ENCODE measurements at regions of chr14 and their contacts with region 1.

Region 1: GRCh38 chr14:71138448-71139293 is 231.4 kb downstream of the PCNX1 start:
- DNase-seq: peak; percentile 49 to 68 (median 59)
- ATAC-seq: peak; percentile 80 to 88 (median 86)
- H3K4me3 ChIP-seq: peak overlapping the region in 1 of 3 donors; percentile 5
- H3K27ac ChIP-seq: no peak overlapping the region
- H3K4me1 ChIP-seq: peaks cover 0 to 2% (median 0%) of the 10 kb centered on the region in 4 donors
- H3K27me3 ChIP-seq: no peaks in the 10 kb centered on the region
- CTCF ChIP-seq: peak; percentile 87 to 90 (median 88)
- POLR2A ChIP-seq: no peak

Region 2: DNA sequence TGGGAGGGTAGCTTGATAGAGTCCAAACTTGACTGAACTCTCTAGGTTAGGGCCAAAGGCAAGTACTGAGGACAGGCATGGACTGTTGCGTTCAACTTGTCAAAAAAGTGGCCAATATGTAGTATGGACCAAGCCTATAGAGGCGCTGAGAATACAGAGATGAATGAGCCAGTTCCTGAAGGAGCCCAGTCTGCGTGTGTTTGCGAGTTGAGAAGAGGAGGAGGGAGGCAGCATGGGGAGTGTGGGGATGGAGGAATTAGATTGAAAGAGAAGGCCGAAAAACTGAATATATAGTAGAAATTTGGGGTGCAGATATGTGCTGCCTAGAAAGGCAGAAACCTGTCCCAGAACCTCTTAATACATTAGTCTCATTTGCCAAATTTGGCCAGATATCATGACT is 181.0 kb after region 1 on chr14:
- intact Hi-C with region 1: loop called (anchors 10 kb)
- DNase-seq: no peak
- ATAC-seq: no peak
- H3K4me3 ChIP-seq: peak overlapping the region; percentile 92 to 95 (median 92)
- H3K27ac ChIP-seq: peak overlapping the region in 1 of 3 donors; percentile 98
- H3K4me1 ChIP-seq: peaks cover 0 to 29% (median 5%) of the 10 kb centered on the region in 4 donors
- H3K27me3 ChIP-seq: no peaks in the 10 kb centered on the region
- CTCF ChIP-seq: no peak
- POLR2A ChIP-seq: no peak

Region 3: GRCh38 chr14:71753126-71753830 is 614.6 kb after region 1 on chr14:
- intact Hi-C with region 1: loop called (anchors 2 to 10 kb)
- DNase-seq: peak; percentile 81 to 84 (median 84)
- ATAC-seq: peak; percentile 88 to 98 (median 96)
- H3K4me3 ChIP-seq: no peak overlapping the region
- H3K27ac ChIP-seq: no peak overlapping the region
- H3K4me1 ChIP-seq: peaks cover 0 to 6% (median 0%) of the 10 kb centered on the region in 4 donors
- H3K27me3 ChIP-seq: no peaks in the 10 kb centered on the region
- CTCF ChIP-seq: peak; percentile 87 to 93 (median 91)
- POLR2A ChIP-seq: no peak

Measured in right lobe of liver (tissue), 6 donors.